Panc1 (cell line): ENCODE measurements at regions of chr6 and their contacts with region 1.

Region 1: DNA sequence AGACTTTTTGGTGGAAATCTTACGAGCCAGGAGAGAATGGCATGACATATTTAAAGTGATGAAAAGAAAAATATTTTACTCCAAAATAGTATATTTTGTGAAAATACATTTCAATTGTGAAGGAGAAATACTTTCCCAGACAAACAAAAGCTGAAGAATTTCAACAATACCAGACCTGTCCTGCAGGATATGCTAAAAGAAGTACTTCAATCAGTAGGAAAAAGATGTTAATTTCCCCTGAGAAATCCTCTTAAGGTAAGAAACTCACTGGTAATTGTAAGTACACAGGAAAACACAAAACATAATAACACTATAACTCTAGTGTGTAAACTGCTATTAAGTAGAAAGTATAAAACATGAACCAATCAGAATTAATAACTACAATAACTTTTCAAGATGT is 341.8 kb upstream of the GJE1 start:
- DNase-seq: no peak
- ATAC-seq: no peak
- H3K4me3 ChIP-seq: no peak overlapping the region
- H3K27ac ChIP-seq: no peak overlapping the region
- H3K4me1 ChIP-seq: no peaks in the 10 kb centered on the region
- H3K27me3 ChIP-seq: no peaks in the 10 kb centered on the region
- CTCF ChIP-seq: no peak

Region 2: GRCh38 chr6:142285235-142286087 is 494.5 kb after region 1 on chr6:
- CTCF ChIA-PET with region 1: no interaction called
- POLR2A ChIA-PET with region 1: no interaction called
- in situ Hi-C with region 1: no loop called
- intact Hi-C with region 1: loop called (anchors 5 kb)
- DNase-seq: no peak
- ATAC-seq: no peak
- H3K4me3 ChIP-seq: no peak overlapping the region
- H3K27ac ChIP-seq: peak overlapping the region; percentile 5; the same call in 1 of the 2 replicates
- H3K4me1 ChIP-seq: no peaks in the 10 kb centered on the region
- H3K27me3 ChIP-seq: no peaks in the 10 kb centered on the region
- CTCF ChIP-seq: no peak